ENCODE measurements at regions of chr10 and their contacts with region 1.

Region 1: GRCh38 chr10:68156373-68157185 is 47.3 kb downstream of the MYPN start:
- H3K4me3 ChIP-seq: no peak overlapping the region
- H3K27ac ChIP-seq: no peak overlapping the region
- H3K4me1 ChIP-seq: 0 out of 2 replicates have a peak, but pooled peaks cover 11% of the 10 kb centered on the region
- CTCF ChIP-seq: peak; percentile 62

Region 2: DNA sequence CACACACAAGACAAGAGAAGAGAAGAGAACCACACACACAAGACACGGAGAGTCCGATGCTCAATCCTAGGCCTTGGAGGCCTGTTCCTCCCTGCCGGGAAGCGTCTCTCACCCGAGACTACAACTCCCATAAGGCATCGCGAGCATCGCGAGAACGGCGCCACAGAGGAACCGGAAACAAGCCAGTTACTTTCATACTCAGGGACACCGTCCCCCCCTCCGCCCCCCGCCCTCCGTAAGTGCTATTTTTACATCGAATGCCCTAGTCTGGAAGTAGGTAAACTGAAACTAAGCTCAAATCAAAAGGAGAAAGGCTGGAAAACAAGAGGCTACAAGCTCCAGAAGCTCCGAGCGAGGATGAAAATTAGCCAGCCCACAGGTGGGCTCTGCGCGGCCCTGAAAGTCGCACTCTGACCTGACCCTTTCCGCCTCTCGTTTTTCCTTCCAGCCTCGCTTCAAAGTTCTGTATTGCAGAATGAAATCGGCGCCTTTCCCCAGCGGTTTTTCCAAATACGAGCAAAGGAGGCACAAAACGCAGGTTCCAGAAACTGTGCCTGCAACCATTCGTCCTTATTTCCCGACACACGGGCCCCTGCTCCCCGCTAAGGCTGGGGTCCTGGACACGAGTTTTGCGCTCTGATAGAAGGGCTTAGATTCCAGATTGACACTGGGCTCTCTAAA is 307.1 kb before region 1 on chr10:
- CTCF ChIA-PET with region 1: interaction called, 31 read pairs
- POLR2A ChIA-PET with region 1: no interaction called
- H3K4me3 ChIP-seq: peak overlapping the region; percentile 76
- H3K27ac ChIP-seq: peak overlapping the region; percentile 59
- H3K4me1 ChIP-seq: no peaks in the 10 kb centered on the region
- CTCF ChIP-seq: no peak

Region 3: GRCh38 chr10:68082872-68083271 is 73.7 kb before region 1 on chr10:
- CTCF ChIA-PET with region 1: interaction called, 78 read pairs
- POLR2A ChIA-PET with region 1: no interaction called
- H3K4me3 ChIP-seq: no peak overlapping the region
- H3K27ac ChIP-seq: no peak overlapping the region
- H3K4me1 ChIP-seq: no peaks in the 10 kb centered on the region
- CTCF ChIP-seq: no peak

Region 4: DNA sequence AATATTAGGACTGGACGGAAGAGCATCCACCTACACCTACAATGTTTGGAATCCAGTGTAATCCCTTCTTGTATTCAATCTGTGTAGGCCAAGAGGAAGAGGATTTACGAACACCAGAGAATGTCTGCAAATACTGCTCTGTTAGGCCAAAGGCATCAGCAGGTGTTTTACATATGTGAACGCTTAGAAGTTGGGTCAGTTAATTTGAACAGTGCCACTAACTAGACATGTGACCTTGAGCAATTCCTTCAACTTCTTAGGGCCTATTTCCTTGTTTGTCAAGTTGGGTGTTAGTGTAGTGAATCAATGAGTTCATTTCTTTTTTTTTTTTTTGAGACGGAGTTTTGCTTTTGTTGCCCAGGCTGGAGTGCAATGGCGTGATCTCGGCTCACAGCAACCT is 11.9 kb before region 1 on chr10:
- CTCF ChIA-PET with region 1: interaction called, 11 read pairs
- POLR2A ChIA-PET with region 1: no interaction called
- H3K4me3 ChIP-seq: no peak overlapping the region
- H3K27ac ChIP-seq: no peak overlapping the region
- H3K4me1 ChIP-seq: peaks cover 5% of the 10 kb centered on the region
- CTCF ChIP-seq: no peak

Region 5: GRCh38 chr10:68175954-68176353 is 19.4 kb after region 1 on chr10:
- CTCF ChIA-PET with region 1: interaction called, 11 read pairs
- POLR2A ChIA-PET with region 1: no interaction called
- H3K4me3 ChIP-seq: no peak overlapping the region
- H3K27ac ChIP-seq: no peak overlapping the region
- H3K4me1 ChIP-seq: 0 out of 2 replicates have a peak, but pooled peaks cover 5% of the 10 kb centered on the region
- CTCF ChIP-seq: no peak

Measured in HEK293 (cell line).